ENCODE measurements at regions of chr6 and their contacts with region 1.

Region 1: GRCh38 chr6:149749594-149750135 is at the start of gene PCMT1:
- DNase-seq: peak; percentile 93 to 96 (median 96)
- H3K4me3 ChIP-seq: peak within 1 kb of the TSS; percentile 88 to 95 (median 92)
- H3K4me3 Mint-ChIP-seq: peak within 1 kb of the TSS; percentile 91 to 93
- H3K27ac ChIP-seq: peak within 1 kb of the TSS; percentile 89 to 97
- H3K27ac Mint-ChIP-seq: peak within 1 kb of the TSS; percentile 87 to 97 (median 94)
- H3K4me1 ChIP-seq: peaks cover 55 to 72% of the 10 kb centered on the region in 2 donors
- H3K4me1 Mint-ChIP-seq: peaks cover 55% of the 10 kb centered on the region
- H3K27me3 ChIP-seq: no peaks in the 10 kb centered on the region
- H3K27me3 Mint-ChIP-seq: no peaks in the 10 kb centered on the region
- CTCF ChIP-seq: no peak
- polyA plus RNA-seq, gene PCMT1: 84.8 to 315 (median 262) TPM

Region 2: GRCh38 chr6:149717588-149718458 is 31.8 kb before region 1 on chr6 and contains the start of gene LATS1:
- intact Hi-C with region 1: loop called (anchors 5 kb)
- DNase-seq: peak; percentile 68 to 80 (median 76)
- H3K4me3 ChIP-seq: peak within 1 kb of the TSS; percentile 84 to 90 (median 88)
- H3K4me3 Mint-ChIP-seq: peak within 1 kb of the TSS; percentile 96
- H3K27ac ChIP-seq: peak within 1 kb of the TSS; percentile 83 to 97
- H3K27ac Mint-ChIP-seq: peak within 1 kb of the TSS; percentile 94 to 96 (median 95)
- H3K4me1 ChIP-seq: peaks cover 17 to 30% of the 10 kb centered on the region in 2 donors
- H3K4me1 Mint-ChIP-seq: peaks cover 20% of the 10 kb centered on the region
- H3K27me3 ChIP-seq: no peaks in the 10 kb centered on the region
- H3K27me3 Mint-ChIP-seq: peaks cover 0 to 2% (median 2%) of the 10 kb centered on the region in 3 donors
- CTCF ChIP-seq: no peak
- polyA plus RNA-seq, gene LATS1: 5.2 to 10.3 (median 10.1) TPM

Region 3: GRCh38 chr6:149863697-149864577 is 114.3 kb after region 1 on chr6 and contains the start of gene LRP11:
- intact Hi-C with region 1: no loop called
- DNase-seq: peak; percentile 25 to 52 (median 45)
- H3K4me3 ChIP-seq: peak within 1 kb of the TSS; percentile 42 to 75 (median 57)
- H3K4me3 Mint-ChIP-seq: peak within 1 kb of the TSS; percentile 77 to 91
- H3K27ac ChIP-seq: no peak within 1 kb of the TSS
- H3K27ac Mint-ChIP-seq: peak within 1 kb of the TSS in 3 of 7 donors; percentile 20 to 27 (median 25)
- H3K4me1 ChIP-seq: peaks cover 16 to 26% of the 10 kb centered on the region in 2 donors
- H3K4me1 Mint-ChIP-seq: peaks cover 21% of the 10 kb centered on the region
- H3K27me3 ChIP-seq: no peaks in the 10 kb centered on the region
- H3K27me3 Mint-ChIP-seq: peaks cover 3 to 11% (median 3%) of the 10 kb centered on the region in 3 donors
- CTCF ChIP-seq: no peak
- polyA plus RNA-seq, gene LRP11: 0.20 to 0.41 (median 0.32) TPM